Mucosa of descending colon (tissue), 3 donors: ENCODE measurements at regions of chr11 and their contacts with region 1.

Region 1: DNA sequence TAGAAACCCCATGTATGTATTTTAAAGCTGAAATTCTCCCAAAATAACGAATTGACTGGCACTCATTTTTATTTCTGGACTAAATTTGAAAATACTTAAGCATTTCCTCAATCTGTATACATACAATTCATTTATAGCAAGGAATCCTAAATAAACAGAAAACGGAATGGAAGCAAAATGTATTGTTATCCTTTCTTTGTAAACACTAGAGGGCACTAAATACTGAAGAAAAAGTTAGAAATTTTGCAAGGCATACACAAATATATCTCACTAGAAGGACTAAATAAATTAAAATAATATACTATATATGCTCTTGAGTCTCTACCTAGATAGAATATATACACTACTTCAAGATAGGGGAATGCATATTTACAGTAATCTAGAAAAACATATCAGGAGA is 23.1 kb upstream of the ANO5 start:
- DNase-seq: no peak
- ATAC-seq: no peak
- H3K4me3 ChIP-seq: no peak overlapping the region
- H3K4me1 ChIP-seq: no peaks in the 10 kb centered on the region
- CTCF ChIP-seq: no peak

Region 2: DNA sequence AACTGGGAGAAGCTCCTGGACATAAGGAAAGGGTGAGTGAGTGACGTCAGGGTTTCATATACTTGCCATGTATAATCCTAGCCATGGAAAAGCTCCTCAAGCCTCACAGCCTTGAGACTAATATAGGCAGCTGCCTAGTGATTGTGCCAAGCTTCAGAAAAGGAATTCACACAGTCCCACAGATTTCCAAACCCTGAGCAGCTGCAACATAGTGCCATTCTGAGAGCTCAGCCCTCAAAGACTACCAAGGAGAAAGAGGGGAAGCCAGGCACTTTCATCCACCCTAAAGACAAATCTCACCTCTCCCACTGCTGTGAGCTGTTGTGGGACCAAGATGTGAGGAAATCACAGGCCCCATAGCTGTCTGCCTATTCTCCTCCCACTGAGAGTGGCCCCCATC is 684.8 kb before region 1 on chr11:
- intact Hi-C with region 1: no loop called
- DNase-seq: no peak
- ATAC-seq: no peak
- H3K4me3 ChIP-seq: no peak overlapping the region
- H3K4me1 ChIP-seq: no peaks in the 10 kb centered on the region
- CTCF ChIP-seq: no peak

Region 3: GRCh38 chr11:22304337-22304961 is 134.6 kb after region 1 on chr11:
- intact Hi-C with region 1: loop called in 1 of 2 experiments (anchors 10 kb)
- DNase-seq: no peak
- ATAC-seq: peak; percentile 35
- H3K4me3 ChIP-seq: no peak overlapping the region
- H3K4me1 ChIP-seq: no peaks in the 10 kb centered on the region
- CTCF ChIP-seq: no peak

Region 4: DNA sequence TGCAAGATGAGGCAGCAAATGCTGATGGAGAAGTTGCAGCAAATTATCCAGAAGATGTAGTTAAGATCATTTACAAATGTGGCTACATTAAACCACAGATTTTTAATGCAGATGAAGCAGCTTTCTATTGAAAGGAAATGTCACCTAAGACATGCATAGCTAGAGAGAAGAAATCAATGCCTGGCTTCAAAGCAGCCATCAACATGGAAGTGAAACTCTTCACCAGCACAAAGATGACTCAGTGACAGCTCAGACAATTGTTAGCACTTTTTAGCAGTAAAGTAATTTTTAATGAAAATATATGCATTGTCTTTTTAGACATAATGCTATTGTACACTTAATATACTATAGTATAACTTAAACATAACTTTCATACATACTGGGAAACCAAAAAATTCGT is 384.4 kb after region 1 on chr11:
- intact Hi-C with region 1: loop called in 1 of 2 experiments (anchors 10 kb)
- DNase-seq: no peak
- ATAC-seq: no peak
- H3K4me3 ChIP-seq: no peak overlapping the region
- H3K4me1 ChIP-seq: no peaks in the 10 kb centered on the region
- CTCF ChIP-seq: no peak